CD14-positive monocyte (primary cell): ENCODE measurements at regions of chr11 and their contacts with region 1.

Region 1: DNA sequence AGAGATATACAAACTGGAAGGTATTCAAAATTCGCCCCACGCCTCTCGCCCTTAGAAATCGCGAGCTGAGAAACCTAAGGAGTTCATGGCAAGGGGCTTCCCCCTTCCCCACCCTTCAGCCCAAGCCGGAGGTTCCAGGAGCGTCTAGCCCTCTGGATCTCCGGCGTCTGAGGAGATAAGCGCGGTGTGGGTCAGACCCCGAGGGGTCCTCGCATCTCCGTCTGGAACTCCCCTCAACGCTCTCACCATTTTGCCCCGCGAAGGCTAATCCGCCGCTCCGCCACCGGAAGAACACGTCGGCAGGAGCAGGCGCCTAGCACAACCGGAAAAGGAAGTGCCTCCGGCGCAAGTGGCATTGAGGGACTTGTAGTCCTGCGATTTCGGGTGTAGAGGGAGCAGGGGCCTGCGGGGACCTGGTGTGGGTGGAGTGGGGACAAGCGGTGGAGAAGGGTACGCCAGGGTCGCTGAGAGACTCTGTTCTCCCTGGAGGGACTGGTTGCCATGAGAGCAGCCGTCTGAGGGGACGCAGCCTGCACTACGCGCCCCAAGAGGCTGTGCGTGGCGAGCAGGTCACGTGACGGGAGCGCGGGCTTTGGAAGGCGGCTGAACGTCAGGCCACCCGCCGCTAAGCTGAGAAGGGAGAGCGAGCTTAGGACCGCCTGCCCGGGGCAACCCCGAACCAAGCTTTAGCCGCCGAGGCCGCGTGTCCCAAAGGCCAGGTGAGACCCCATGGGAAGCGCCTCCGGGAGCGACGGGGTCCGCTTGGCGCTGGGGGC is at the starts of genes FEN1 and TMEM258:
- DNase-seq: peak; percentile 86 to 89 (median 87)
- H3K4me3 ChIP-seq: peak within 1 kb of the TSS; percentile 68 to 77 (median 73)
- H3K4me3 Mint-ChIP-seq: peak within 1 kb of the TSS; percentile 90 to 99
- H3K27ac ChIP-seq: peak within 1 kb of the TSS; percentile 87 to 98
- H3K27ac Mint-ChIP-seq: peak within 1 kb of the TSS; percentile 99 to 100 (median 100)
- H3K4me1 ChIP-seq: peaks cover 16 to 26% of the 10 kb centered on the region in 2 donors
- H3K4me1 Mint-ChIP-seq: peaks cover 21% of the 10 kb centered on the region
- H3K27me3 ChIP-seq: no peaks in the 10 kb centered on the region
- H3K27me3 Mint-ChIP-seq: no peaks in the 10 kb centered on the region
- CTCF ChIP-seq: no peak
- polyA plus RNA-seq, gene FEN1: 3.5 to 6.4 (median 4.3) TPM
- polyA plus RNA-seq, gene TMEM258: 199 to 224 (median 220) TPM

Region 2: GRCh38 chr11:61834278-61835048 is 42.0 kb after region 1 on chr11:
- intact Hi-C with region 1: loop called in 1 of 2 experiments (anchors 5 kb)
- DNase-seq: peak; percentile 35 to 62 (median 53)
- H3K4me3 ChIP-seq: peak overlapping the region in 1 of 3 experiments; percentile 21
- H3K4me3 Mint-ChIP-seq: peak overlapping the region in 1 of 2 donors; percentile 62
- H3K27ac ChIP-seq: peak overlapping the region; percentile 43 to 75
- H3K27ac Mint-ChIP-seq: peak overlapping the region; percentile 43 to 92 (median 89)
- H3K4me1 ChIP-seq: peaks cover 57 to 61% of the 10 kb centered on the region in 2 donors
- H3K4me1 Mint-ChIP-seq: peaks cover 63% of the 10 kb centered on the region
- H3K27me3 ChIP-seq: peaks cover 0 to 3% of the 10 kb centered on the region in 2 donors
- H3K27me3 Mint-ChIP-seq: peaks cover 2 to 5% (median 3%) of the 10 kb centered on the region in 3 donors
- CTCF ChIP-seq: no peak

Region 3: GRCh38 chr11:61891331-61892084 is 99.0 kb after region 1 on chr11 and contains the start of gene FADS3:
- intact Hi-C with region 1: loop called in 1 of 2 experiments (anchors 5 kb)
- DNase-seq: peak; percentile 44 to 49 (median 45)
- H3K4me3 ChIP-seq: peak within 1 kb of the TSS; percentile 58 to 79 (median 60)
- H3K4me3 Mint-ChIP-seq: peak within 1 kb of the TSS; percentile 79 to 88
- H3K27ac ChIP-seq: peak within 1 kb of the TSS in 1 of 2 donors; percentile 23
- H3K27ac Mint-ChIP-seq: peak within 1 kb of the TSS in 6 of 7 donors; percentile 21 to 86 (median 72)
- H3K4me1 ChIP-seq: peaks cover 12 to 28% of the 10 kb centered on the region in 2 donors
- H3K4me1 Mint-ChIP-seq: peaks cover 23% of the 10 kb centered on the region
- H3K27me3 ChIP-seq: peaks cover 0 to 19% of the 10 kb centered on the region in 2 donors
- H3K27me3 Mint-ChIP-seq: peaks cover 9 to 18% (median 17%) of the 10 kb centered on the region in 3 donors
- CTCF ChIP-seq: no peak
- polyA plus RNA-seq, gene FADS3: 2.5 to 6.8 (median 5.8) TPM

Region 4: GRCh38 chr11:62108017-62108750 is 315.7 kb after region 1 on chr11:
- intact Hi-C with region 1: loop called in 1 of 2 experiments (anchors 5 kb)
- DNase-seq: peak; percentile 48 to 73 (median 66)
- H3K4me3 ChIP-seq: no peak overlapping the region
- H3K4me3 Mint-ChIP-seq: no peak overlapping the region
- H3K27ac ChIP-seq: no peak overlapping the region
- H3K27ac Mint-ChIP-seq: no peak overlapping the region
- H3K4me1 ChIP-seq: peaks cover 18 to 19% of the 10 kb centered on the region in 2 donors
- H3K4me1 Mint-ChIP-seq: peaks cover 14% of the 10 kb centered on the region
- H3K27me3 ChIP-seq: no peaks in the 10 kb centered on the region
- H3K27me3 Mint-ChIP-seq: peaks cover 2 to 10% (median 8%) of the 10 kb centered on the region in 3 donors
- CTCF ChIP-seq: peak; percentile 76